ENCODE measurements at regions of chr3 and their contacts with region 1.

Region 1: DNA sequence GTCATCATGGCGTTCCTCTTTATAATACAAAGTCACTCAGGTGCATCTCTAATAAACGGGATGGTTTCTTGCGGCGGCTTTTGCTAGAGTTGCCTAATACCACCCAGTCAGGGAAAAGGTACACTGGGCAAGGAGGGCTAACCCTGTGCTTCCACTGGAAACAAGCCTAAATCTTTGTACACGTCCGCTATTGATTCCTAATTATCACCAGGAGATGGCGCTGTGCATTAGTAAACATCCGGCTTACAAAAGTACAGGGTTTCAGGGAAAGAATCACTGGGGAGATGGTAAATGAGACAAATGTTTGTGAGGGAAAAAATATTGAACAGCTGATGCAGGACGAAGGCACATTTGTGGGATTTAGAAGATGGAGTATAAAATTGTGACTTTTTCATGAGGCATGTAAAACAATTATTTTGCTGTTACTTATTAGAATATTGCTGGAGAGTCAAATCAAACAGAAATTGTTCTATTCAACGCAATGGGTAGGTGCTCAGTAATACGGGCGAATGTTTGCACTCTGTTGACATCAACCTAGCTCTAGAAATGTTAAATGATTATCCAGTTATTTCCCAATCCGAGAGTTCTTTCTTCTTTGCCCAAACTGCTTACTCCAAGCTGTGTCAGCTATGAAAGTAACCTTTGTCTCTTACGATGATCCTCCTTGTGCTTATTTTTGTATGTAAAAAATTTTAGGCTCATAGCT is 50.6 kb downstream of the GMNC start:
- DNase-seq: peak; percentile 13
- CTCF ChIP-seq: peak; percentile 56

Region 2: GRCh38 chr3:190830031-190830430 is 18.1 kb after region 1 on chr3:
- CTCF ChIA-PET with region 1: interaction called, 15 read pairs
- POLR2A ChIA-PET with region 1: no interaction called
- DNase-seq: no peak
- CTCF ChIP-seq: no peak

Region 3: DNA sequence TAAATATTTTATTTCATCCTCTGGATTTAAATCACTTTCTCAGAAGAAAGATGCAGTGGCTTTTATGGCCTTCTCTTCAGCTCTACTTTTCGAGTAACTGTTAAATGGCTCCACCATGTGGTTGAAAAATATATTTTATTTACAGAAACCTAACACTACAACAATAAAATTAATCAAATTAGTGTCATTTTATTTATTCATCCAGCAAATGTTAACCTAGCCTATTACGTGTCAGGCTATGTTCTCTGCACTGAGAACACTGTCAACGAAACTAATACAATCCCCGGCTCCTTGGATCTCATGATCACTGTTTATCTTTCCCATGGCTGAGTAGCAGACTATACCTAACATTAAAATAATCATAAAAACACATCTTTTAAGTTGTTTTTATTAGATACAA is 239.1 kb after region 1 on chr3:
- CTCF ChIA-PET with region 1: interaction called, 40 read pairs
- POLR2A ChIA-PET with region 1: no interaction called
- DNase-seq: peak; percentile 20
- CTCF ChIP-seq: peak; percentile 45

Measured in GM10248 (cell line).